Tibial artery (tissue), 4 donors: ENCODE measurements at regions of chr1 and their contacts with region 1.

Region 1: GRCh38 chr1:42681741-42682483 is at the start of gene YBX1:
- DNase-seq: peak; percentile 98
- H3K4me3 ChIP-seq: peak within 1 kb of the TSS; percentile 88 to 96
- H3K27ac ChIP-seq: peak within 1 kb of the TSS; percentile 91 to 92
- H3K4me1 ChIP-seq: peaks cover 0 to 54% (median 40%) of the 10 kb centered on the region in 4 donors
- H3K27me3 ChIP-seq: no peaks in the 10 kb centered on the region
- CTCF ChIP-seq: no peak

Region 2: GRCh38 chr1:42456010-42456758 is 225.7 kb before region 1 on chr1 and contains the starts of genes PPCS and ZMYND12:
- intact Hi-C with region 1: loop called (anchors 5 kb)
- DNase-seq: peak; percentile 87 to 92
- H3K4me3 ChIP-seq: peak within 1 kb of the TSS; percentile 79 to 80
- H3K27ac ChIP-seq: peak within 1 kb of the TSS; percentile 88 to 91
- H3K4me1 ChIP-seq: peaks cover 0 to 23% (median 12%) of the 10 kb centered on the region in 4 donors
- H3K27me3 ChIP-seq: no peaks in the 10 kb centered on the region
- CTCF ChIP-seq: peak; percentile 13 to 39

Region 3: GRCh38 chr1:42756956-42757891 is 75.3 kb after region 1 on chr1:
- intact Hi-C with region 1: loop called (anchors 5 kb)
- DNase-seq: no peak
- H3K4me3 ChIP-seq: no peak overlapping the region
- H3K27ac ChIP-seq: no peak overlapping the region
- H3K4me1 ChIP-seq: peaks cover 0 to 4% (median 0%) of the 10 kb centered on the region in 4 donors
- H3K27me3 ChIP-seq: no peaks in the 10 kb centered on the region
- CTCF ChIP-seq: peak; percentile 52 to 53

Region 4: GRCh38 chr1:42816585-42817434 is 134.9 kb after region 1 on chr1 and contains the starts of genes ERMAP and SVBP:
- intact Hi-C with region 1: loop called (anchors 2 kb)
- DNase-seq: peak; percentile 88 to 95
- H3K4me3 ChIP-seq: peak within 1 kb of the TSS; percentile 62 to 66
- H3K27ac ChIP-seq: peak within 1 kb of the TSS; percentile 87 to 91
- H3K4me1 ChIP-seq: peaks cover 0 to 20% (median 13%) of the 10 kb centered on the region in 4 donors
- H3K27me3 ChIP-seq: no peaks in the 10 kb centered on the region
- CTCF ChIP-seq: no peak

Region 5: DNA sequence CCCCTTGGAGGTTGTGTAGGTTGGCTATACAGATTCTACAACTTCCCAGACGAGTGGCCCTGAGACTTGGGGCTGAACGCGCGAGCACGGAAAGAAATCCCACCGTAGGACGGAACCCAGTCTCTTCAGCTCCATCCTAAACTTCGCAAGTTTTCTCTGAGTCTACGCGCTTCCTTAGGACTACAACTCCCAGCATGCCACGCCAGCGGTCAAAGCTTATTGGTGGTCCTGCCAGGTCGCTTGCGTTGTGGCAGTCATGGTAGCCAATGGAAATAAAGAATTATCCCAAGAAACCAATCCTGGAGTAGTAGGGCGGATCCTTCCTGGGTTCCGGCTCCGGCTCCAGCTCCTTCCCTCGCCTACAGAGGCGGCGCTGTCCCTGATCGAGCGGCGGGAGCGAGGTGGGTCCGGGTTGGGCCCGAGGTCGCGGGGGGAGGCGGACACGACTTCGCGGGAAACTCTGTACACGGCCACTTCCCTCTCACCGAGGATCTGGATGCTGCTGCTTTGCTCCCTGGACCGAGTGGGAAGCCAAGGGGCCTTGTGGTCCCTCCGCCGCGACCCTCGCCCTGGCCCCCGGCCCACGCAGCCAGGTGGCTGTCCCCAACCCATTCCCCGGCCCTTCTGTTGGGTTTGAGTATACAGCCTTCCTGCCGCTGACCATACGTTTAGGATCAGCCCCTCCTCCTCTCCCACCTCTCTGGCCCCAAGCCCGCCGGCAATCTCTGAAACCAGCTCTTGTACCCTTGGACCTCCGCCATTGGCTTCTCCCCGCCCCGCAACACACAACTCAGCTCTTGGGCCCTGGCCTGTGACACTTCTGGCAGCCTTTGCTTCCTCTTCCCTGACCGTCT is 164.6 kb after region 1 on chr1 and contains the start of gene ZNF691:
- intact Hi-C with region 1: loop called (anchors 10 kb)
- DNase-seq: peak; percentile 97
- H3K4me3 ChIP-seq: peak within 1 kb of the TSS; percentile 90 to 91
- H3K27ac ChIP-seq: peak within 1 kb of the TSS; percentile 85 to 87
- H3K4me1 ChIP-seq: peaks cover 0 to 24% (median 13%) of the 10 kb centered on the region in 4 donors
- H3K27me3 ChIP-seq: no peaks in the 10 kb centered on the region
- CTCF ChIP-seq: peak; percentile 27 to 46